Activated T-helper 1 cell treated with anti-CD3 and anti-CD28 coated beads, Interleukin-12 subunit alpha, Interleukin-12 subunit beta, Interleukin-2, Interleukin-4 antibody, amounts not matched to agents 30 ng/mL and 10 ng/mL and 1 ng/mL, durations not matched to agents 14 hours and 24 hours and 36 hours (primary cell): ENCODE measurements at regions of chr6 and their contacts with region 1.

Region 1: GRCh38 chr6:100780678-100781077 is 100.5 kb downstream of the ASCC3 start:
- DNase-seq: no peak
- H3K4me3 Mint-ChIP-seq: no peak overlapping the region
- H3K27ac Mint-ChIP-seq: no peak overlapping the region
- H3K4me1 Mint-ChIP-seq: no peaks in the 10 kb centered on the region
- H3K27me3 Mint-ChIP-seq: no peaks in the 10 kb centered on the region

Region 2: DNA sequence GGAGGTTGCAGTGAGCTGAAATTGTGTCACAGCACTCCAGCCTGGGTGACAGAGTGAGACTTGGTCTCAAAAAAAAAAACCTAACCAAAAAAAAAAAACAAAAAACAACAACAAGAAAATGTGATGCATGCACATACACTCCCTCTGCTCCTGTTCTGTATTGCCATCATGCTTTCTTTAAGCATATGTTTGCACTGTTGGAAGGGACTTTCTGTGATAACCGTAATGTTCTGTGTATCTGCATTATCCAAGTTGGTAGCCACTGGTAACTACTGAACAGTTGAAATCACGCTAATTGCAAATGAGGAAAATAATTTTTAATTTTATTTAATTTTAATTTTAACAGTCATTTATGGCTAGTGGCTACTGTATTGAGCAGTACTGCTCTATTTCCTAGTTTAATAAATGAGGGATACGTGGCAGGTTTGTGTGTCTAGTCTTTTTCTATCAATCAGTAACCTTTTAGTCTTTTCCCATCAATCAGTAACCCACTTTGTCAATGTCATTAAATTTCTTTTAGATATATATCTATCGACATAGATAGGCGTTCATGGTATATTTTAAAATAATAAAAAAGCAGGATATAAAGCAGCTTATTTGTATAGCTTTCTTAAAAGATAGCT is 35.1 kb before region 1 on chr6:
- intact Hi-C with region 1: loop called (anchors 1 kb)
- DNase-seq: no peak
- H3K4me3 Mint-ChIP-seq: no peak overlapping the region
- H3K27ac Mint-ChIP-seq: no peak overlapping the region
- H3K4me1 Mint-ChIP-seq: no peaks in the 10 kb centered on the region
- H3K27me3 Mint-ChIP-seq: no peaks in the 10 kb centered on the region

Region 3: GRCh38 chr6:100846276-100846675 is 65.6 kb after region 1 on chr6:
- intact Hi-C with region 1: no loop called
- DNase-seq: no peak
- H3K4me3 Mint-ChIP-seq: no peak overlapping the region
- H3K27ac Mint-ChIP-seq: no peak overlapping the region
- H3K4me1 Mint-ChIP-seq: peaks cover 22% of the 10 kb centered on the region
- H3K27me3 Mint-ChIP-seq: no peaks in the 10 kb centered on the region